CD8-positive, alpha-beta T cell (primary cell): ENCODE measurements at regions of chr17 and their contacts with region 1.

Region 1: GRCh38 chr17:41864836-41865595 is at the start of gene KLHL11:
- DNase-seq: peak; percentile 72 to 94 (median 87)
- ATAC-seq: peak; percentile 91
- H3K4me3 ChIP-seq: peak within 1 kb of the TSS; percentile 92 to 99
- H3K4me3 Mint-ChIP-seq: no peak within 1 kb of the TSS
- H3K27ac ChIP-seq: peak within 1 kb of the TSS; percentile 85 to 93
- H3K27ac Mint-ChIP-seq: no peak within 1 kb of the TSS
- H3K4me1 ChIP-seq: peaks cover 32% of the 10 kb centered on the region
- H3K4me1 Mint-ChIP-seq: peaks cover 22% of the 10 kb centered on the region
- H3K27me3 ChIP-seq: no peaks in the 10 kb centered on the region
- H3K27me3 Mint-ChIP-seq: no peaks in the 10 kb centered on the region
- CTCF ChIP-seq: no peak
- total RNA-seq, gene KLHL11: 38.4 to 38.9 TPM

Region 2: GRCh38 chr17:41811549-41812380 is 53.3 kb before region 1 on chr17 and contains the start of gene P3H4:
- CTCF ChIA-PET with region 1: interaction called, 4 read pairs
- POLR2A ChIA-PET with region 1: interaction called, 14 read pairs
- intact Hi-C with region 1: loop called (anchors 2 kb)
- DNase-seq: peak; percentile 51 to 89 (median 75)
- ATAC-seq: peak; percentile 87
- H3K4me3 ChIP-seq: peak within 1 kb of the TSS; percentile 73 to 93
- H3K4me3 Mint-ChIP-seq: peak within 1 kb of the TSS; percentile 93
- H3K27ac ChIP-seq: peak within 1 kb of the TSS in 1 of 2 experiments; percentile 35
- H3K27ac Mint-ChIP-seq: peak within 1 kb of the TSS; percentile 55
- H3K4me1 ChIP-seq: peaks cover 26% of the 10 kb centered on the region
- H3K4me1 Mint-ChIP-seq: peaks cover 23% of the 10 kb centered on the region
- H3K27me3 ChIP-seq: no peaks in the 10 kb centered on the region
- H3K27me3 Mint-ChIP-seq: peaks cover 2% of the 10 kb centered on the region
- CTCF ChIP-seq: peak; percentile 51
- total RNA-seq, gene P3H4: 0.89 to 1.0 TPM

Region 3: DNA sequence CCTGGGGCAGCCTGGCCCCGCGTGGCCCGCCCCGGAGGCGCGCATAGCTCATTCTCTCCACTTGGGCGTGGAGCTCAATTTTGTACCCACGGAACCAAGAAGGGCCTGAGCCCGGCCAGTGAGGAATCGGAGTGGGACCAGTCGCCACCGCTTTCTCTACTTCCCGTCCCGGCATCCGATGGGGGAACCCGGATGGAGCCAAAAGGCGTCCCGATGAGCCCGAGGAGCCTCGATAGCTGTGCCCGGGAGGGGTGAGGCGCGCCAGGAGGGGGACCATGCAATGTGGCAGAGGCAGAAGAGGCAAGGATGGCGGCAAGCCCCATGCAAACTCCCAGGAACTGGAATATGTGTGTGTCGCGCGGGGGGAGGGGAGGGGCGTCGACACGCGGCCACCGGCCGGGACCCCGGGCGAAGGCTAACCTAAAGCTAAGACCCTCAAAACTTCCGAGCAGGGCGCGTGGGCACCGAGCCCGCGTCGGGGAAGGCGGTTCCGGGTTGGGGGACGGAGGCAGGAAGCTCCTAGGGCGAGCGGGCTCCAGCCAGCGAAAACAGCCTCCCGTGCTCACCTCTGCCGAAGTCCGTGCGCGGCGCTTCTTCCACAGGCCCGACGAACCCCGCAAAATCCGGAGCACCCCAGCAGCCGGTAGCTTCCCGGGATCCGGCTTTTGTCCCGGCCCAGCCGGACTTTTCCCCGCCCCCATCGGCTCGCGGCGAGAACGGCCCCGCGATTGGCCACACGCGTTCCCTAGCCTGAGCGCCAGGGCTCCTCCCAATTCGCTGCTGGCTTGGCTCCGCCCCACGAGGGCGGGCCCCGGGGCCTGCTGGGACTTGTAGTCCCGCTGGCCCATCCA is 53.5 kb after region 1 on chr17 and contains the start of gene ACLY:
- CTCF ChIA-PET with region 1: no interaction called
- POLR2A ChIA-PET with region 1: interaction called, 3 read pairs
- intact Hi-C with region 1: loop called (anchors 1 to 2 kb)
- DNase-seq: peak; percentile 89 to 97 (median 95)
- ATAC-seq: peak; percentile 99
- H3K4me3 ChIP-seq: peak within 1 kb of the TSS; percentile 94 to 100
- H3K4me3 Mint-ChIP-seq: peak within 1 kb of the TSS; percentile 90
- H3K27ac ChIP-seq: peak within 1 kb of the TSS; percentile 82 to 86
- H3K27ac Mint-ChIP-seq: peak within 1 kb of the TSS; percentile 81
- H3K4me1 ChIP-seq: peaks cover 17% of the 10 kb centered on the region
- H3K4me1 Mint-ChIP-seq: peaks cover 32% of the 10 kb centered on the region
- H3K27me3 ChIP-seq: no peaks in the 10 kb centered on the region
- H3K27me3 Mint-ChIP-seq: no peaks in the 10 kb centered on the region
- CTCF ChIP-seq: no peak
- total RNA-seq, gene ACLY: 24.9 to 25.0 TPM

Region 4: GRCh38 chr17:41966463-41967140 is 101.6 kb after region 1 on chr17 and contains the start of gene CNP:
- CTCF ChIA-PET with region 1: no interaction called
- POLR2A ChIA-PET with region 1: no interaction called
- intact Hi-C with region 1: loop called (anchors 1 to 5 kb)
- DNase-seq: peak; percentile 77 to 95 (median 92)
- ATAC-seq: peak; percentile 88
- H3K4me3 ChIP-seq: peak within 1 kb of the TSS; percentile 75 to 89
- H3K4me3 Mint-ChIP-seq: peak within 1 kb of the TSS; percentile 83
- H3K27ac ChIP-seq: peak within 1 kb of the TSS; percentile 75 to 79
- H3K27ac Mint-ChIP-seq: peak within 1 kb of the TSS; percentile 94
- H3K4me1 ChIP-seq: peaks cover 33% of the 10 kb centered on the region
- H3K4me1 Mint-ChIP-seq: peaks cover 44% of the 10 kb centered on the region
- H3K27me3 ChIP-seq: no peaks in the 10 kb centered on the region
- H3K27me3 Mint-ChIP-seq: no peaks in the 10 kb centered on the region
- CTCF ChIP-seq: no peak
- total RNA-seq, gene CNP: 16.7 to 18.8 TPM

Region 5: DNA sequence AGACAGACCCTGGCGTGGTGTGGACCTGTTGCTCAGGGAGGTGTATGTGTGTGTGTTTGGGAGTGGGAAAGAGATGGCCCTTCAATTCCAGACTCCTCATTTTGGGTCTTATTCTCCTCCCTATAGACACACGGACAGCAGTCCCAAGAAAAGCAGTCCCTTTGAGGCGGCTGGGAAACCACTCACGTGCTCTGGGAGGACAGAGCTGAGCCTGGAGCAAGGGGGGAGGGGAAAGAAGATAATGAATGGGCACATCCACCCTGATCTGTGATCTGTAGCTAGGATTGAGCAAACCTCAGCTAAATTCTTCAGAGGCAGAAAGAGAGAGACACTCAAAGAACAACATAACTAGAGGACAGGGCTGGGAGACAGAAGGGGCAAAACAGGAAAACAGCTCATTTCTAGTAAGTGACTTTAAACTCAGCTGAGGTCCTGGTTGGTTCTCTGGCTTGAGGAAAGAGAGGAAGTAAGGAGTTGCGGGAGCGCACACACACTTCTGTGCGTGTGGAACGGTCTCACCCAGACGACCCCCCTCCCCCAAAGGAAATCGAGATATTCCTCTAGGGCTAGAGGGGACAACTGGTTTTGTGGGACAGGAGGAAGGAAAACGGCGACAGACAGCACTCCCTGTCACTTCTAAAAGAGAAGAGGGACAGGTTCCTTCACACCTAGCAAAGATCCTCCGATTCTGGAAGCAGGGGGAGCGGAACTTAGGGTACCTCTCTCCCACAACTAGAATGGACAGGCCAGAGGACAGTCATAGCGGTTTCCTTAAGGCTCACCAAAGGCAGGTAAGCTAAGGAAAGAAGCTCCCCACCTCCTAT is 289.1 kb after region 1 on chr17:
- CTCF ChIA-PET with region 1: no interaction called
- POLR2A ChIA-PET with region 1: no interaction called
- intact Hi-C with region 1: loop called in 1 of 2 experiments (anchors 10 kb)
- DNase-seq: peak in 2 of 9 experiments; percentile 20 to 40
- ATAC-seq: no peak
- H3K4me3 ChIP-seq: peak overlapping the region; percentile 94 to 95
- H3K4me3 Mint-ChIP-seq: peak overlapping the region; percentile 98
- H3K27ac ChIP-seq: peak overlapping the region; percentile 78 to 87
- H3K27ac Mint-ChIP-seq: peak overlapping the region; percentile 95
- H3K4me1 ChIP-seq: peaks cover 24% of the 10 kb centered on the region
- H3K4me1 Mint-ChIP-seq: peaks cover 39% of the 10 kb centered on the region
- H3K27me3 ChIP-seq: no peaks in the 10 kb centered on the region
- H3K27me3 Mint-ChIP-seq: no peaks in the 10 kb centered on the region
- CTCF ChIP-seq: no peak